Activated B cell treated with CpG ODN at 0.5 μM for 24 hours (primary cell): ENCODE measurements at regions of chr14 and their contacts with region 1.

Region 1: GRCh38 chr14:52791203-52792096 is at the start of gene GNPNAT1:
- DNase-seq: peak; percentile 79
- ATAC-seq: peak; percentile 96
- H3K4me3 Mint-ChIP-seq: peak within 1 kb of the TSS; percentile 91
- H3K27ac Mint-ChIP-seq: peak within 1 kb of the TSS; percentile 77
- H3K4me1 Mint-ChIP-seq: peaks cover 27% of the 10 kb centered on the region
- H3K27me3 Mint-ChIP-seq: no peaks in the 10 kb centered on the region
- CTCF ChIP-seq: no peak
- total RNA-seq, gene GNPNAT1: 9.7 and 11.4 TPM in 2 replicates

Region 2: GRCh38 chr14:51989293-51990234 is 801.9 kb before region 1 on chr14 and contains the start of gene RTRAF:
- CTCF ChIA-PET with region 1: no interaction called
- POLR2A ChIA-PET with region 1: no interaction called
- intact Hi-C with region 1: loop called (anchors 10 kb)
- DNase-seq: peak; percentile 86
- ATAC-seq: peak; percentile 97
- H3K4me3 Mint-ChIP-seq: peak within 1 kb of the TSS; percentile 98
- H3K27ac Mint-ChIP-seq: peak within 1 kb of the TSS; percentile 93
- H3K4me1 Mint-ChIP-seq: peaks cover 37% of the 10 kb centered on the region
- H3K27me3 Mint-ChIP-seq: no peaks in the 10 kb centered on the region
- CTCF ChIP-seq: no peak
- total RNA-seq, gene RTRAF: 160 and 163 TPM in 2 replicates

Region 3: GRCh38 chr14:52695481-52696091 is 95.9 kb before region 1 on chr14 and contains the start of gene ERO1A:
- CTCF ChIA-PET with region 1: no interaction called
- POLR2A ChIA-PET with region 1: no interaction called
- intact Hi-C with region 1: loop called (anchors 1 kb)
- DNase-seq: peak; percentile 73
- ATAC-seq: peak; percentile 75
- H3K4me3 Mint-ChIP-seq: peak within 1 kb of the TSS; percentile 99
- H3K27ac Mint-ChIP-seq: peak within 1 kb of the TSS; percentile 94
- H3K4me1 Mint-ChIP-seq: peaks cover 30% of the 10 kb centered on the region
- H3K27me3 Mint-ChIP-seq: no peaks in the 10 kb centered on the region
- CTCF ChIP-seq: no peak
- total RNA-seq, gene ERO1A: 30.8 and 31.5 TPM in 2 replicates

Region 4: DNA sequence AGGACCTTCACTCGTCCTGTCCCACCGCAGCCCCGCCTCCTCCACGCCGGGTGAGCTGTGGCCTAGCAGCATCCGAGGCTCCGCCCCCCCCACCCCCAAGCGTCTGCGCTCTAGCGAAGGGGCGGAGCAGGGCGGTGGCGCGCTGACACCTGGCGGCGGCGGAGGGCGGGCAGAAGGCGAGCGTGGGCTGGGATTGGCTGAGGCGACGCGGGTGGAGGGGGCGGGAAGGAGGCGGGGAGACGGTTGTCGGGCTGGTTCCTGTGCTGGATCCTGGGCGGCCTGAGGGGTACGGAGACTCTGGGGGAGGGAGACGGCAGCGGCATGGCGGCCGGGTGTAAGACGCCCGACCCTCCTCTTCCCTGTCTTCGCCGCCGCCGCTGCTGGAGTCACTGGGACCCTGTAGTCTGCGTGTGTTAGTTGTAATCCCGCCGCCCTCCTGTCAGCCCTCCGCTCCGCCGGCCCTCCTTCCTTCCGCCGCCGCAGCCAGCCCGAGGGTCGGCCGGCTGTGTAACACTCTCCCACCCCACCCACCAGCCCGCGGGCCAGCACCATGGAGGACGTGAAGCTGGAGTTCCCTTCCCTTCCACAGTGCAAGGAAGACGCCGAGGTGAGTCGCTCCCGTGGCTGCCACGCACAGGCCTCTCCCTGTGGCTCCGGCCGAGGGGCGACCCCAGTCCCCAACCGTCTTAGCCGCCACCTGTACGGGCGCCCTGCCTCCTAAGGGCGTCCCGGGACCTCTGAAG is 61.4 kb before region 1 on chr14 and contains the start of gene STYX:
- CTCF ChIA-PET with region 1: no interaction called
- POLR2A ChIA-PET with region 1: interaction called, 3 read pairs
- intact Hi-C with region 1: loop called (anchors 1 kb)
- DNase-seq: peak; percentile 95
- ATAC-seq: peak; percentile 96
- H3K4me3 Mint-ChIP-seq: peak within 1 kb of the TSS; percentile 94
- H3K27ac Mint-ChIP-seq: peak within 1 kb of the TSS; percentile 89
- H3K4me1 Mint-ChIP-seq: peaks cover 46% of the 10 kb centered on the region
- H3K27me3 Mint-ChIP-seq: no peaks in the 10 kb centered on the region
- CTCF ChIP-seq: no peak
- total RNA-seq, gene STYX: 13.1 and 13.5 TPM in 2 replicates

Region 5: DNA sequence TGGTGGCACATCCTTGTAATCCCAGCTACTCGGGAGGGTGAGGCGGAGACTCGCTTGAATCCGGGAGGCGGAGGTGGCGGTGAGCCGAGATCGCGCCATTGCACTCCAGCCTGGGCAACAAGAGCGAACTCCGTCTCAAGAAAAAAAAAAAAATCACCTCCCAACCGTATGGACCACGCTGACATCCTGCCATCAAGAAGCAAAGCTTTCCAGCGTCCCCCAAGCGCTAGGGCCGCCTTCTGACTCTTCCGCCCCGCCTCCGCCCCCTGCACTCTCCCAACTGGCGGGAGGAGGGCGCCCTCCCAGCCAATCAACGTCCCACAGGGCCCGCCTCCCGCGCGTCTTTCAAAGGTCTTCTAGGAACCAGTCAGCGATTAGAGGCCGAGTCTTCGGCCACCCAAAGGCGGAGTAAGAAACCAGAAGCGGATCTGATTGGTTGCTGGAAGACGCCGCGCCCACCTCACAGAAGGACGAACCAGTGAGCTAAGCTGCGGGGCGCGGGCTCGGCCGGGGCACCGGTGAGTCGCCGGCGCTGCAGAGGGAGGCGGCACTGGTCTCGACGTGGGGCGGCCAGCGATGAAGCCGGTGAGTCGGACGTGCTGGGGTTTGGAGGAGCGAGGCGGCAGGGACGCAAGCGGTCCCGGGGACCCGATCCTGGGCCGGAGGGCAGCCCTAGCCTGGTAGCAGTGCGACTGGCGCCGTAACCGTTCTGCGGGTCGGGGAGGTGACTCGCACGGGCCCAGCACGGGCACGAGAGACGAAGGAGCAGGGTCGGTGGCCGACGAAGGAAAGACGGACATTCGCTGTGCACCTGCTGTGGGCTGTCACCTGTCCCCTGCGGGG is 1605.3 kb after region 1 on chr14 and contains the start of gene CDKN3:
- CTCF ChIA-PET with region 1: no interaction called
- POLR2A ChIA-PET with region 1: interaction called, 4 read pairs
- intact Hi-C with region 1: loop called (anchors 2 kb)
- DNase-seq: peak; percentile 94
- ATAC-seq: peak; percentile 94
- H3K4me3 Mint-ChIP-seq: peak within 1 kb of the TSS; percentile 86
- H3K27ac Mint-ChIP-seq: peak within 1 kb of the TSS; percentile 82
- H3K4me1 Mint-ChIP-seq: peaks cover 23% of the 10 kb centered on the region
- H3K27me3 Mint-ChIP-seq: no peaks in the 10 kb centered on the region
- CTCF ChIP-seq: no peak
- total RNA-seq, gene CDKN3: 0.91 and 1.6 TPM in 2 replicates